Aorta (tissue), 5 donors: ENCODE measurements at regions of chr1 and their contacts with region 1.

Region 1: GRCh38 chr1:29703596-29704370 is 467.5 kb downstream of the PTPRU start:
- DNase-seq: no peak
- ATAC-seq: no peak
- H3K4me3 ChIP-seq: no peak overlapping the region
- H3K27ac ChIP-seq: no peak overlapping the region
- H3K4me1 ChIP-seq: no peaks in the 10 kb centered on the region
- H3K27me3 ChIP-seq: no peaks in the 10 kb centered on the region

Region 2: DNA sequence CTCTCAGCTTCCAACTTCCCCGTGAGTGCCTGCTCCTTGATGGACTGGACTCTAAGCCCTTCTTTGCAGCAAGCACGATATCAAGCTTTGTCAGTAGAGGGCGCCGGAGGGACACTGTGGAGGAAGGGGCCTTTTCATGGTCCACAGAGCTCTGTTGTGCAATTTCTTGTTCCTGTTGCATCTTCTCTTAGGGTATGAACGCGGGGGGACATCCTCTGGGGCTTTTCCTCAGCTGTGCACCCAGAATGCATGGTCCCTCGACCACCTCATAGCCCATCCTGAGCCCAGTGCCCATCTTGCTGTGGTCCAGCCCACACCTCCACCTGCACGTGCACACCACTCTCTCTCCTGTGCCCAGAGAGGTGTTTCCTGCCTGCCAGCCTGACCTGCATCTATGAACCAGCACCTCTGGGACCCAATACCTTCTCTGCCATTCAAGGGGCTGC is 89.3 kb after region 1 on chr1:
- intact Hi-C with region 1: loop called in 1 of 2 experiments (anchors 5 kb)
- DNase-seq: peak; percentile 90 to 91
- ATAC-seq: peak; percentile 60
- H3K4me3 ChIP-seq: no peak overlapping the region
- H3K27ac ChIP-seq: no peak overlapping the region
- H3K4me1 ChIP-seq: no peaks in the 10 kb centered on the region
- H3K27me3 ChIP-seq: no peaks in the 10 kb centered on the region

Region 3: DNA sequence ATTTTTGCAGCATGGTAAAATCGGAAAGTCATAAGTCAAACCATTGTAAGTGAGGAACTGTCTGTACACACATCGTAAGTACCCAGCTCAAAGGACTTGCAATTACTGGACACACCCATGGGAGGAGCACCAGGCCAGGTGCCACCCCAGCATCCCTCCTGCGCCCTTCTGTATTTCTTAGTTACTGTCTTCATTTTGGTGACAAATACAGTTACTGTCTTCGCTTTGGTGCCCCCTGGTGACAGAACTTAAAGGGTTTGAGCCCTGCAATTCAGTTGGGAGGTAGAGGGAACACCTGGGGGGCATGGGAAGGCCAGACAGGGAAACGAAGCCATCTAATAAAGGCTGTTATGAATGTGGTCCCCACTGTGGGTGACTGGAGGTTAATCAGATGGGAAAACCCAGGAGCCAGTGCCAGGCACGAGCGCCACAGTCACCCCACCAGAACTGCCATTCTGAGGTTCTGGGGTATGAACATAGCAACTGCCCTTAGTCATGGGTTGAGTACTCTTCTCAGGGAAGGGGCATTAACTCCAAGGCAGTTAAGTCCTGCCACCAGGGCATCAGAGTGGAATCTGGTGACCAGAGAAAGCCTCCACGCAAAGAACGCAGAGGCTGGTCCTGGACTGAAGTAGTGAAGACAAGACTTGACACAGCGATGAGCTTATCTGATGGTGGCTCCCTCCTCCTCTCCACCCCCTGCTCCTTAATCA is 145.4 kb after region 1 on chr1:
- intact Hi-C with region 1: loop called in 1 of 2 experiments (anchors 5 kb)
- DNase-seq: no peak
- ATAC-seq: no peak
- H3K4me3 ChIP-seq: no peak overlapping the region
- H3K27ac ChIP-seq: no peak overlapping the region
- H3K4me1 ChIP-seq: no peaks in the 10 kb centered on the region
- H3K27me3 ChIP-seq: no peaks in the 10 kb centered on the region

Region 4: DNA sequence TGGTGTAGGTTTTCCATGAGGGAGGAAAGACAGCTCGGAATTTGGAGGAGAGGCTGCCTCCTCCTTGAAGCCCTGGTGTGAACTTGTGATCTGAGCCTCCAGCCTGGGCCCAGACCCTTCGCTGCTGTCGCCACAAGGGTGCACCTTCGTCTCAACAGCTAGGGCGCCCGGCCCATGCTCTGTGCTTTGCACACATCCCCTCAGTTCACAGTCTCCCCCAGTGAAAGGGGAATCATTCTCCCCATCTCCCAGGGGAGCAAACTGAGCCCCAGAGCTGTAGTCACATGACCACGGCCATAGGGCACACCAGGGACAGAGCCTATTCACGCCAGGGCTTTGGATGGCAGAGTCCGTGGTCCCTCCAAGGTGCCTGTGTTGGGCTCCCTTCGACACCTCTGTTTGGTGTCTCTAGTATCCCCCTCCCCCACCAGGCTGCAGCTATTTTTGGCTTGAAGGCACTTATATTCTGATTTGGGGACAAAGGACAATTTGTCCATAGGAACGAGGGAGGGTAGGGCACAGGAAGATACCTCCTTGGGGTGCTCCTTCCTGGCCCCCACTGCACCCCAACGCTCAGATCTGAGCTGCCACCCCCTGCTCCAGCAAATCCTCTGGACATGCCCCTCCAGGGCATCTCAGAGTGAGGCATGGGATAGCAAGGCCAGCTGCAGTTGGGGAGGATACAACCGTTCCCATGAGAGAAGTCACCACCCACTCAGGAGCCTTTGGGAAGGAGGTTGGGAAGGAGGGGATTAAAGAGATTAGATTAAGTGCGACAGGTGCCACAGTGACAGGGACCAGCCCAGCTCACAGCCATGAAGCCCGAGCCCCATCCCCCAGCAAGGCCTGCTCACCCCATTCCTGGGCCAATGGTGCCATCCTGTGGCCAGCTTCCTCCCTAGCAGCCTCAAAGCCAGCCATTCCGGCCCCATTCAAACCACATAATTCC is 1003.9 kb after region 1 on chr1:
- intact Hi-C with region 1: loop called in 1 of 2 experiments (anchors 10 kb)
- DNase-seq: peak; percentile 76 to 90
- ATAC-seq: peak; percentile 79
- H3K4me3 ChIP-seq: no peak overlapping the region
- H3K27ac ChIP-seq: no peak overlapping the region
- H3K4me1 ChIP-seq: no peaks in the 10 kb centered on the region
- H3K27me3 ChIP-seq: no peaks in the 10 kb centered on the region